Activated CD4-positive, alpha-beta T cell treated with anti-CD3 and anti-CD28 coated beads for 36 hours (primary cell): ENCODE measurements at regions of chr16 and their contacts with region 1.

Region 1: DNA sequence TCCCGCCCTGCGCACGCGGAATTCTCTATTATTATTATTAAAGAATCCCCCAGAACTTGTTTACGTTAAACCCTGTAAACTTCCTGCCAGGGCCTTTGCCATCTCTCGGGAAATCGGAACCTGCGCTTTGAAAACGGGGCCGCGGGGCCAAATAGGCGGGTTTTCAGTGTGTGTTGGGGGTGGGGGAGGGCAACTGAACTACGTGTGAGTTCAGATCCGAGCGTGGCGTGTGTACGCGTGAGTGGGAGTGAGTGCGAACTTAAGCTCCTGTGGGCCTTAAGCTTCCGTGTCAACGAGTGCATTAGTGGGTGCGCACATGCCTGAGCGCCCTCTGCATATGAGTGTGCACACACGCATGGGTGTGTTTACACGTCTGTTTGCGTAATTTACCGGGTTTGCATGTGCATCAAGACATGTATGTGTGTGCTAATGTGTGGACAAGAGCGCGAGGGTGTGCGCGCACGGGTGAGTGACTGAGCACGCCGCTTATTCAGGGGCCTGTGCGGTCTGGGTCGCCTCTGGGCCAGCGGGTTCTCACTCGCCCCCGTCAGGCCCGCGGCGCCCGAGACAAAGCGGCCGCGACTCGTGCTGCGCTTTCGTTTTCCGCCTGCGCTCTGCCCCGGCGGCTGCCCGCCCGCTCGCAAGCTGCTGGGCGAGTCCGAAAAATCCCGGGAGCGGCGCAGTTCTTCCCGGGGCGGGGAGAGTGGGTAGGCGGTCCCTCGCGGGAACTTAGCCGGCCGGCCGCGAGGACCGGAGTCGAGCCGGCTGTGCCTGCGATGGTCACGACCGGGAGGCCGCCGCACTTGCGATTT is 1.2 kb upstream of the FOXF1 start:
- DNase-seq: peak; percentile 41
- ATAC-seq: peak; percentile 23
- H3K4me3 Mint-ChIP-seq: peak overlapping the region; percentile 56
- H3K27ac Mint-ChIP-seq: peak overlapping the region; percentile 0
- H3K4me1 Mint-ChIP-seq: peaks cover 32% of the 10 kb centered on the region
- H3K27me3 Mint-ChIP-seq: peaks cover 61% of the 10 kb centered on the region

Region 2: DNA sequence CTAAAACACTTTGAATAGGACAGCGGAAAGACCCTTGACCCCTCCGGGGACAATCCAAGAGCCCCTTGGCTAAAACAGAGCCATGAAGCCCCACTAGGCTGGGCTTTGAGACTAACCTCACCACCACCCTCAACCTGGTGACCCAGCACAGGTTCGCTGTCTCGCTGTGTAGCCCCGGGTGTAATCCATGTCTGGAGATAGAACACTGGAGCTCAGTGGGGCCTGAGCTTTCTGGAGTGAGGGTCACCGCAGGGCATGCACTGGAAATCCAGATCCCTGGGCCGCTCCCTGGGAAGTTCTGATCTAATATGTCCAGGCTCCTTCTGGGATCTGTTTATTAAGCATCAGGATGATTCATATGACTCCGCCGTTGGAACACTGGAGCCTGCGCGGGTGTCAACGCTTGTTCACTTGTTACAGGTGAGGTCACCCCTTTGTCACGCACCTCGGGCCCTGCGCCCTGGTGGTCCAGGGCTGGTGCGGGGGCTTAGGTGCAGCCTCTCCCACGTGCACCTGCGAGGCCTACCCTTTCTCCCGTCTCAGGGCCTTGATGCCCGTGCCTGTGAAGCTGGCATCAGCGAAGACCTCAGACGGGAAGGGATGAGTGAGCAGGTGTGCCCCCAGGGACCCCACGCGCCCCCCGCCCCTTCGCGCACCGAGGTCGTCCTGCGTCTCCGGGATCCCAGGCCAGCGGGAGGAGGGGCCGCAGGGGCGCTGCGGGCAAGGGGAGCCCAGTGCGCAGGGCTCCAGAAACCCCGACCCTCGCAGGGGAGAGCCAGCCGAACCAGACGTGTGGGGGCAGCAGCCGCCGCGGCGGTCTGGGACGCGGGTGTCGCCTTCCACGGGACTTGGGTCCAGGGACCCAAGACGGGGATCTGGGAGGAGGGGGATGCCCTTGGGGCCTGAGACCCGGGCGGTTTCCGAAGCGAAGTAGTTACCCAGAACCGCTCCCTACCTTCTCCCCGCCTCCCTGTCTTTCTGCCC is 222.9 kb before region 1 on chr16:
- CTCF ChIA-PET with region 1: interaction called, 4 read pairs
- POLR2A ChIA-PET with region 1: no interaction called
- intact Hi-C with region 1: loop called in 1 of 2 experiments (anchors 5 kb)
- DNase-seq: no peak
- ATAC-seq: no peak
- H3K4me3 Mint-ChIP-seq: no peak overlapping the region
- H3K27ac Mint-ChIP-seq: no peak overlapping the region
- H3K4me1 Mint-ChIP-seq: no peaks in the 10 kb centered on the region
- H3K27me3 Mint-ChIP-seq: peaks cover 57% of the 10 kb centered on the region

Region 3: GRCh38 chr16:86491256-86492023 is 17.7 kb before region 1 on chr16:
- CTCF ChIA-PET with region 1: no interaction called
- POLR2A ChIA-PET with region 1: no interaction called
- intact Hi-C with region 1: loop called (anchors 1 to 2 kb)
- DNase-seq: no peak
- ATAC-seq: no peak
- H3K4me3 Mint-ChIP-seq: no peak overlapping the region
- H3K27ac Mint-ChIP-seq: no peak overlapping the region
- H3K4me1 Mint-ChIP-seq: peaks cover 5% of the 10 kb centered on the region
- H3K27me3 Mint-ChIP-seq: peaks cover 62% of the 10 kb centered on the region

Region 4: GRCh38 chr16:86498661-86499439 is 10.3 kb before region 1 on chr16:
- CTCF ChIA-PET with region 1: no interaction called
- POLR2A ChIA-PET with region 1: no interaction called
- intact Hi-C with region 1: loop called (anchors 1 to 2 kb)
- DNase-seq: no peak
- ATAC-seq: no peak
- H3K4me3 Mint-ChIP-seq: no peak overlapping the region
- H3K27ac Mint-ChIP-seq: no peak overlapping the region
- H3K4me1 Mint-ChIP-seq: peaks cover 5% of the 10 kb centered on the region
- H3K27me3 Mint-ChIP-seq: peaks cover 72% of the 10 kb centered on the region